ENCODE measurements at regions of chr11 and their contacts with region 1.

Region 1: GRCh38 chr11:5011254-5011653 is 16.6 kb downstream of the OR51L1 start:
- DNase-seq: no peak
- H3K4me3 ChIP-seq: no peak overlapping the region
- H3K27ac ChIP-seq: no peak overlapping the region
- H3K27me3 ChIP-seq: no peaks in the 10 kb centered on the region
- CTCF ChIP-seq: no peak

Region 2: GRCh38 chr11:4607781-4608666 is 403.2 kb before region 1 on chr11 and contains the start of gene TRIM68:
- CTCF ChIA-PET with region 1: no interaction called
- POLR2A ChIA-PET with region 1: interaction called, 11 read pairs
- DNase-seq: peak; percentile 89
- H3K4me3 ChIP-seq: peak within 1 kb of the TSS; percentile 82
- H3K27ac ChIP-seq: peak within 1 kb of the TSS; percentile 94
- H3K27me3 ChIP-seq: no peaks in the 10 kb centered on the region
- CTCF ChIP-seq: no peak
- polyA plus RNA-seq, gene TRIM68: 6.4 and 6.9 TPM in 2 replicates